ENCODE measurements at regions of chr1 and their contacts with region 1.

Region 1: GRCh38 chr1:206583707-206584648 is 28.3 kb downstream of the EIF2D start:
- DNase-seq: peak; percentile 67
- H3K4me3 ChIP-seq: no peak overlapping the region
- H3K27ac ChIP-seq: no peak overlapping the region
- H3K4me1 ChIP-seq: no peaks in the 10 kb centered on the region
- H3K27me3 ChIP-seq: peaks cover 0 to 1% of the 10 kb centered on the region in 2 experiments
- CTCF ChIP-seq: peak; percentile 87 to 88
- POLR2A ChIP-seq: no peak

Region 2: DNA sequence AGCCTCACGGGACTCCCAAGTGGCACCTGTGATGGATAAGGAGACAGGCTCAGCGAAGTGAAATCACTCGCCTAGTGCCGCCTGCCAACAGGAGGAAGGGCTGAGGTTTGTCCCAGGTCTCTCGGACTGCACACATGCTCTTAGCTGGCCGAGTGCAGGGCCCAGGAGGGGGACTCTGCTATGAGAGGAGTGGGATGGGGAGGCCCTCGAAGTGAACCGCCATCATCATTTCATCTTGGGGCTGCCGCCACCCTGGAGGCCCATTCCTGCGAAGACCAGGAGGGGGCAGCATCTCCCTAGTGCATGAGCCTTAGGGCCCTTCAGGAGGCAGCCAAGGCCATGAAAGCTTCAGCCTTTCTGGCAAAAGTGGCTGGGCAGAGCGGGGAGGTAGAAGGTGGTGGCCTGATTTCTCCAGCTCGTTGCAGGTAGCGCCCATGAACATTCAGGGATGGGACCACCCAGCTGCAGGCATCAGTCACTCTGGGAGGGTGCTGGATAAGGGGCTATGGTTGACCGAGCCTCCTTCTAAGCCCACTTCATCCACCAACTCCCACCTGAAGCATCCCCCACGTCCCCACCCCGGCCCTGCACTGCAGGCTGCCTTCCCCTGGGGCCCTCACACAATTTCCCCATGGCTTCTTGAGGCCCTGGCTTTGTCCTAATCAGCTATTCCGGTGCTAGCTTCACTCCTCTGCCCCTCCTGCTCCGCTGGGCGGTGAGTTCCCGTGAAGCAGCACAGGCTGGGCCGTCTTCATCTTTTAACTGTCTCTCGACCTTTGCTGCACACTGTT is 93.8 kb before region 1 on chr1:
- CTCF ChIA-PET with region 1: interaction called, 85 read pairs
- POLR2A ChIA-PET with region 1: no interaction called
- dilution Hi-C with region 1: no loop called
- intact Hi-C with region 1: loop called (anchors 1 kb)
- DNase-seq: peak; percentile 59
- H3K4me3 ChIP-seq: no peak overlapping the region
- H3K27ac ChIP-seq: no peak overlapping the region
- H3K4me1 ChIP-seq: peaks cover 8% of the 10 kb centered on the region
- H3K27me3 ChIP-seq: no peaks in the 10 kb centered on the region
- CTCF ChIP-seq: peak; percentile 83 to 92
- POLR2A ChIP-seq: no peak

Region 3: GRCh38 chr1:206507284-206508129 is 76.5 kb before region 1 on chr1 and contains the start of gene RASSF5:
- CTCF ChIA-PET with region 1: interaction called, 12 read pairs
- POLR2A ChIA-PET with region 1: no interaction called
- dilution Hi-C with region 1: no loop called
- intact Hi-C with region 1: loop called (anchors 1 kb)
- DNase-seq: peak; percentile 29
- H3K4me3 ChIP-seq: peak within 1 kb of the TSS in 1 of 3 experiments; percentile 27
- H3K27ac ChIP-seq: no peak within 1 kb of the TSS
- H3K4me1 ChIP-seq: no peaks in the 10 kb centered on the region
- H3K27me3 ChIP-seq: peaks cover 65 to 75% of the 10 kb centered on the region in 2 experiments
- CTCF ChIP-seq: no peak
- POLR2A ChIP-seq: no peak
- total RNA-seq, gene RASSF5: 0.44 and 0.60 TPM in 2 replicates

Region 4: DNA sequence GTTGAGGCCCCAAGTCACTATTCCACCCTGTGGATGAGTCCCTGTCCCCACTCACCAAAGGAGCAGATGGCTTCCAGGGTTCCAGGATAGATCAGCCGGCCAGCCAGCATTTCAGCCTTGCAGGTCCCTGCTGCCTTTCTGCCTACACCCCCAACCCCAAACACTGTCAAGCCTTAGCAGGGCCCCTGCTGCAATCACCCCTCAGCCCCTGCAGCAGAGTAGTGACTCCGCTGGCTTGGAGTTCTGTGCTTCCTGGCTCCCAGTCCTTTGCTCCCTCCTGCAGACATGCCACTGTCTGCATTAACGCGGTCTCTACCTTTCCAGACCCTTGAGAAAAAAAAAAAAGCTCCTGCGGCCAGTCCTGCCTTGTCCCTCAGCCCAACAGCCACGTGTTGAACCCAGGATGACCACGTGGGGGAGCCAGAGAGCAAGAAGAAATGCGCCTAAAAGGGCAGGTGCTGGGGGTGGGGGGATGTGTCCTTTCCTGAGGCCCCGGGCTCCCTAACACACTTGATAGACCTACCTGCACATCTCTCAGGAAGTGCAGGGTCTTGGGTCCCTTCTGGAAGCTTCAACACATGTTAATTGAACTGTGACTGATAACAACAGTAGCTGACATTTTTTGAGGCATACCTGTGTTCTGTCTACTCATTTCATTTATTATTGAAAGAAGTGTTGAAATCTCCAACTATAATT is 39.3 kb before region 1 on chr1:
- CTCF ChIA-PET with region 1: interaction called, 427 read pairs
- POLR2A ChIA-PET with region 1: no interaction called
- dilution Hi-C with region 1: no loop called
- intact Hi-C with region 1: loop called (anchors 1 kb)
- DNase-seq: peak; percentile 64
- H3K4me3 ChIP-seq: no peak overlapping the region
- H3K27ac ChIP-seq: no peak overlapping the region
- H3K4me1 ChIP-seq: no peaks in the 10 kb centered on the region
- H3K27me3 ChIP-seq: peaks cover 4 to 19% of the 10 kb centered on the region in 2 experiments
- CTCF ChIP-seq: peak; percentile 82 to 92
- POLR2A ChIP-seq: no peak

Region 5: GRCh38 chr1:206556750-206557635 is 27.0 kb before region 1 on chr1:
- CTCF ChIA-PET with region 1: interaction called, 18 read pairs
- POLR2A ChIA-PET with region 1: no interaction called
- dilution Hi-C with region 1: no loop called
- intact Hi-C with region 1: loop called (anchors 1 kb)
- DNase-seq: peak; percentile 41
- H3K4me3 ChIP-seq: peak overlapping the region; percentile 36 to 53 (median 36)
- H3K27ac ChIP-seq: no peak overlapping the region
- H3K4me1 ChIP-seq: peaks cover 6% of the 10 kb centered on the region
- H3K27me3 ChIP-seq: peaks cover 30 to 33% of the 10 kb centered on the region in 2 experiments
- CTCF ChIP-seq: no peak
- POLR2A ChIP-seq: no peak

Region 6: DNA sequence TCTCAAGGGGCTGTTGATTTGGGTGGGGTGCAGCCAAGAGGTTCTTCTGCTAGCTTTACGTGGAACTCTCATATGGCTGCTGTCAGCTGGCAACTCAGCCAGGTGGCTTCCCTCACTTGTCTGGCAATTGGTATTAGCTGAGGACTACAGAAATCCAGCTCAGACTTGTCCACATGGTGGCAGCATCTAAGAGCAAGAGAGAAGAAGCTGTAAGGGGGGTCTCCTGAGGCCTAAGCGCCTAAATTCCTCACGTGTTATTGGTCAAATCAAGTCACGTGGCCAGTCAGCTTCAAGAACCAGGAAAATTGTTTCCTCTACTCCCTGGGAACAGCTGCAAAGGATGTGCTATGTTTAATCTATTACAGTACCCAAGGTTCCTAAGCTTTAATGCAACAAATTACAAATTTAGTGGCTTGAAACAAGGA is 47.1 kb after region 1 on chr1:
- CTCF ChIA-PET with region 1: no interaction called
- POLR2A ChIA-PET with region 1: no interaction called
- dilution Hi-C with region 1: no loop called
- intact Hi-C with region 1: no loop called
- DNase-seq: peak; percentile 83
- H3K4me3 ChIP-seq: no peak overlapping the region
- H3K27ac ChIP-seq: no peak overlapping the region
- H3K4me1 ChIP-seq: peaks cover 10% of the 10 kb centered on the region
- H3K27me3 ChIP-seq: peaks cover 4 to 18% of the 10 kb centered on the region in 2 experiments
- CTCF ChIP-seq: peak; percentile 49 to 60
- POLR2A ChIP-seq: no peak